ENCODE measurements at regions of chr2 and their contacts with region 1.

Region 1: GRCh38 chr2:200483729-200484198 is 26.1 kb downstream of the KCTD18 start:
- DNase-seq: peak; percentile 55

Region 2: DNA sequence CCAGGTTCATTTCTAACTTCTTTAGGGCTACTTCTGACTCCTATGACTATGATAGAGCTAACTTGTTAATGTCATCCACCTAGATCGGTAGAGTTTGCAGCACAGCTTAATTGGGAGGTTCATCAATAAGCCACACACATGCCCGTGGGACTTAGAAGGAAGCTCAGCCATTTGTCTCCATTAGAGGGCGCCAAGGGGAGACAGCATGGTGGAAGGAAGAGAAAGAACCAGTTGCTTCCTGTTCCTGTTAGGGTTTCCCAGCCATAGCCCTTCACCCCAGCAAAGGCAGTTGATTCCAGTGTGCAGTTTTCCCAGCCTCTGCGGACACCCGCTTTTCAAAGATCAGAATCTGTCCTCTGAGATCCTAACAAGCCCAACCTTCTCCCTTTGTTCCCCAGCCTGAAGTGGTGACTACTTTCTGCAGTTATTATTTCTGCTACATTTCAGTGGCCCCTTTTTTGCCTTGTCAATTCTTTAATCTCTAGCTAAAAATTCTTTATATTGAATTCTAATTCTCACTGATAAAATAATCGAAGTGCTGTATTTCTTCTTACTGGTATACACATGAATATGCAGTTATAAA is 498.0 kb before region 1 on chr2:
- in situ Hi-C with region 1: loop called (anchors 25 kb)
- DNase-seq: peak; percentile 77